Tibial artery (tissue), 4 donors: ENCODE measurements at regions of chr1 and their contacts with region 1.

Region 1: GRCh38 chr1:179882243-179883039 is at the start of gene TOR1AIP1:
- DNase-seq: peak; percentile 95 to 99
- H3K4me3 ChIP-seq: peak within 1 kb of the TSS; percentile 63 to 92
- H3K27ac ChIP-seq: peak within 1 kb of the TSS; percentile 88 to 100
- H3K4me1 ChIP-seq: peaks cover 0 to 58% (median 43%) of the 10 kb centered on the region in 4 donors
- H3K27me3 ChIP-seq: no peaks in the 10 kb centered on the region
- CTCF ChIP-seq: peak; percentile 48 to 77

Region 2: DNA sequence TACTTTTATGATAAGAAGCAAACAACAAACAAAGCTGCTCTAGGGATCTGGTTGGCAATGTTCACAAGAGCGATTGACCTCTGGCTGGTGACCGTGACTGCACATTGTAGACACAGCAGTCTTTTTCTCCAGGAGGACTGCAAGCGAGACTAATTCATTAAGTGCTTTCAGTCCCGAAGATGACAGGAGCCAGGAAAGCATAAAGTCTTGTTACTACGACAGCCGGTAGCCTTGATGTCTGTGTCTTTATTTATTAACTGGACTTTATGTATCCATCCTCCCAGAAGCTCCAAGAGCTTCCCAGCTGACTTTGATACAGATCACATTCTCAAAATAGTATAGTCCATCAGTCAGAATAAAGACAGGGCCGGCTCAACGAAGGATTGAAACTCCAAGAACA is 121.1 kb before region 1 on chr1:
- intact Hi-C with region 1: no loop called
- DNase-seq: no peak
- H3K4me3 ChIP-seq: no peak overlapping the region
- H3K27ac ChIP-seq: no peak overlapping the region
- H3K4me1 ChIP-seq: no peaks in the 10 kb centered on the region
- H3K27me3 ChIP-seq: peaks cover 0 to 5% of the 10 kb centered on the region in 2 donors
- CTCF ChIP-seq: no peak

Region 3: GRCh38 chr1:179954493-179955297 is 72.3 kb after region 1 on chr1 and contains the start of gene CEP350:
- intact Hi-C with region 1: loop called (anchors 5 kb)
- DNase-seq: peak; percentile 98 to 99
- H3K4me3 ChIP-seq: peak within 1 kb of the TSS; percentile 90 to 97
- H3K27ac ChIP-seq: peak within 1 kb of the TSS; percentile 98
- H3K4me1 ChIP-seq: peaks cover 0 to 44% (median 14%) of the 10 kb centered on the region in 4 donors
- H3K27me3 ChIP-seq: no peaks in the 10 kb centered on the region
- CTCF ChIP-seq: no peak

Region 4: GRCh38 chr1:180154325-180155181 is 272.1 kb after region 1 on chr1 and contains the start of gene QSOX1:
- intact Hi-C with region 1: loop called (anchors 10 kb)
- DNase-seq: peak; percentile 87 to 93
- H3K4me3 ChIP-seq: peak within 1 kb of the TSS; percentile 81 to 95
- H3K27ac ChIP-seq: peak within 1 kb of the TSS; percentile 89 to 92
- H3K4me1 ChIP-seq: peaks cover 0 to 31% (median 17%) of the 10 kb centered on the region in 4 donors
- H3K27me3 ChIP-seq: peaks cover 0 to 3% of the 10 kb centered on the region in 2 donors
- CTCF ChIP-seq: peak; percentile 12 to 17